Activated CD4-positive, alpha-beta memory T cell treated with anti-CD3 and anti-CD28 coated beads for 36 hours (primary cell): ENCODE measurements at regions of chr19 and their contacts with region 1.

Region 1: GRCh38 chr19:38964738-38965137 is 10.8 kb downstream of the FBXO17 start:
- DNase-seq: no peak
- H3K4me3 Mint-ChIP-seq: no peak overlapping the region
- H3K27ac Mint-ChIP-seq: no peak overlapping the region
- H3K4me1 Mint-ChIP-seq: no peaks in the 10 kb centered on the region
- H3K27me3 Mint-ChIP-seq: peaks cover 3% of the 10 kb centered on the region

Region 2: GRCh38 chr19:38975214-38975860 is 10.6 kb after region 1 on chr19 and contains the start of gene FBXO17:
- CTCF ChIA-PET with region 1: interaction called, 23 read pairs
- POLR2A ChIA-PET with region 1: no interaction called
- intact Hi-C with region 1: no loop called
- DNase-seq: no peak
- H3K4me3 Mint-ChIP-seq: no peak within 1 kb of the TSS
- H3K27ac Mint-ChIP-seq: no peak within 1 kb of the TSS
- H3K4me1 Mint-ChIP-seq: peaks cover 24% of the 10 kb centered on the region
- H3K27me3 Mint-ChIP-seq: peaks cover 25% of the 10 kb centered on the region
- total RNA-seq, gene FBXO17: not detected

Region 3: GRCh38 chr19:39038098-39038497 is 73.4 kb after region 1 on chr19:
- CTCF ChIA-PET with region 1: interaction called, 3 read pairs
- POLR2A ChIA-PET with region 1: no interaction called
- intact Hi-C with region 1: loop called (anchors 5 kb)
- DNase-seq: peak; percentile 27
- H3K4me3 Mint-ChIP-seq: no peak overlapping the region
- H3K27ac Mint-ChIP-seq: no peak overlapping the region
- H3K4me1 Mint-ChIP-seq: no peaks in the 10 kb centered on the region
- H3K27me3 Mint-ChIP-seq: peaks cover 3% of the 10 kb centered on the region